ENCODE measurements at regions of chr10 and their contacts with region 1.

Region 1: GRCh38 chr10:27504007-27504807 is at the start of gene RAB18:
- DNase-seq: peak; percentile 99
- ATAC-seq: peak; percentile 98
- total RNA-seq, gene RAB18: 119 TPM

Region 2: DNA sequence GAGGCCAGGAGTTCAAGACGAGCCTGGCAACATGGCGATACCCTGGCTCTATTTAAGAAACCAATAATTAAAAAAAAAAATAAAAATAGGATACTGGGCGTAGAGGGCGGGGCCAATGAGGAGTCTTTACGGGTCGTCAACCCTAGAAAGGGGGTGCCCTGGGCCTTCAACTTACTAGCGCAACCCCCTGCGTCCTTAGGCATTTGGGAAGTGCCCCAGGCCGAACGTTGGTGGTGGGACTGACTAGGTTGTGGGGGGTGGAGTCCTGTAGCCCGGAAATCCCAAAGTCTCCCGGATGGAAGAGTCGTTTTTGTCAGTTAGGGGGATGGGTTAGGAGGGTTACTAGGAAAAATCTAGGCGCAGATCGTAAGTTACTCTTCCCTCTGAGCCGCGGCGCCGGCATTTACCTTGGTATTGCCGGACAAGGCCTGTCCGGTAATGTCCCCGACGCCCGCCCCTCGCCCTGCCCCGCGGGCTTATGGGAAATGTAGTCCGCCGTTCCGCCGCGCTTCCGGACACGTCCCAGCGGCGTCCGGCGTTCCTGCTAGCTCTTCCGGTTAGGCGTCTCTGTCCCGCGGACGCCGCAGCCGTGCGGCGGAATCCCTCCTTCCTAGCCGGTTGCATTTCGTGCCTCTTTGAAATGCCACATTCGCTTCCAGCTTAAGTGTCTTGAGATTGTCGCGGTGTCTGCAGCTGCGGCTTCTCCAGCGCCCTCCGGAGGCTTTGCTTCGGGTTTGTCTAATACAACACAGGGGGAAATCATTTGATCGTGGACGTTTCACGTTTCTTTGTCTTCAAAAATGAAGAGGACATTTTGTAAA is 262.3 kb before region 1 on chr10:
- intact Hi-C with region 1: loop called (anchors 10 kb)
- DNase-seq: peak; percentile 95
- ATAC-seq: peak; percentile 92

Region 3: GRCh38 chr10:27490807-27491206 is 13.4 kb before region 1 on chr10:
- intact Hi-C with region 1: no loop called
- DNase-seq: no peak
- ATAC-seq: no peak